ENCODE measurements at regions of chr7 and their contacts with region 1.

Region 1: GRCh38 chr7:92708111-92709042 is 118.2 kb upstream of the FAM133B start:
- DNase-seq: no peak
- H3K4me3 Mint-ChIP-seq: no peak overlapping the region
- H3K27ac Mint-ChIP-seq: peak overlapping the region; percentile 79
- H3K4me1 Mint-ChIP-seq: peaks cover 34% of the 10 kb centered on the region
- H3K27me3 Mint-ChIP-seq: no peaks in the 10 kb centered on the region

Region 2: GRCh38 chr7:92621026-92621540 is 87.3 kb before region 1 on chr7:
- intact Hi-C with region 1: loop called (anchors 1 kb)
- DNase-seq: peak; percentile 93
- H3K4me3 Mint-ChIP-seq: peak overlapping the region; percentile 71
- H3K27ac Mint-ChIP-seq: peak overlapping the region; percentile 95
- H3K4me1 Mint-ChIP-seq: peaks cover 46% of the 10 kb centered on the region
- H3K27me3 Mint-ChIP-seq: no peaks in the 10 kb centered on the region

Region 3: GRCh38 chr7:92691578-92691977 is 16.8 kb before region 1 on chr7:
- intact Hi-C with region 1: loop called (anchors 1 kb)
- DNase-seq: peak; percentile 83
- H3K4me3 Mint-ChIP-seq: peak overlapping the region; percentile 56
- H3K27ac Mint-ChIP-seq: peak overlapping the region; percentile 87
- H3K4me1 Mint-ChIP-seq: peaks cover 68% of the 10 kb centered on the region
- H3K27me3 Mint-ChIP-seq: no peaks in the 10 kb centered on the region

Region 4: GRCh38 chr7:92797693-92798092 is 89.3 kb after region 1 on chr7:
- intact Hi-C with region 1: no loop called
- DNase-seq: peak; percentile 72
- H3K4me3 Mint-ChIP-seq: no peak overlapping the region
- H3K27ac Mint-ChIP-seq: no peak overlapping the region
- H3K4me1 Mint-ChIP-seq: peaks cover 42% of the 10 kb centered on the region
- H3K27me3 Mint-ChIP-seq: no peaks in the 10 kb centered on the region